Endothelial cell of umbilical vein (primary cell): ENCODE measurements at regions of chr1 and their contacts with region 1.

Region 1: DNA sequence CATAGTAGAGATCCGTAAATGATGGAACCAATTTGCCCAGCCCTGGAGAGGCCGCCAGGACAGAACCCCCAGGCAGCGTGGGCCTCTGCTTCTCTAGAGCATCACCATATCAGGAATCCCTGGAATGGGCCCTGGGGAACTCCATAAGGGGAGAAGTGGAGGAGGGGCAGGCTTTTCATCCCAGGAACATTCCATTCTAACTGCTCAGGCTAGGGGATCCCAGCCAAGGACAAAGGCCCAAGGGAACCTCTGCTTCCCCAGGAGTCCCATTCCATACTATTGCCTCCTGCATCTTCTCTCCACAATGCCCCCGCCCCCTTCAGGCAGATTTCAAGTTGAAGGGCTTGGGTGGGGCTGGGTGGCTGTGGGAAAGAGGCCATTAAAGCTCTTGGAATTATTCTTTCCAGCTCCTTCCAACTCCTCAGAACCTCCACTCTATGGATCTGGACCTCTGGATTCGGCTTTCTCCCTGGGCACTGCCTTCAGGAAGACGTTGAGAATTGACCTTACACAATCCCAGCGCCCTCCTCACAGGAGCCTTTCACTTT is 6.0 kb downstream of the TRNP1 start:
- DNase-seq: peak; percentile 45
- H3K4me3 ChIP-seq: no peak overlapping the region
- H3K27ac ChIP-seq: peak overlapping the region; percentile 70
- H3K4me1 ChIP-seq: peaks cover 27% of the 10 kb centered on the region
- H3K27me3 ChIP-seq: no peaks in the 10 kb centered on the region
- CTCF ChIP-seq: no peak
- POLR2A ChIP-seq: no peak

Region 2: DNA sequence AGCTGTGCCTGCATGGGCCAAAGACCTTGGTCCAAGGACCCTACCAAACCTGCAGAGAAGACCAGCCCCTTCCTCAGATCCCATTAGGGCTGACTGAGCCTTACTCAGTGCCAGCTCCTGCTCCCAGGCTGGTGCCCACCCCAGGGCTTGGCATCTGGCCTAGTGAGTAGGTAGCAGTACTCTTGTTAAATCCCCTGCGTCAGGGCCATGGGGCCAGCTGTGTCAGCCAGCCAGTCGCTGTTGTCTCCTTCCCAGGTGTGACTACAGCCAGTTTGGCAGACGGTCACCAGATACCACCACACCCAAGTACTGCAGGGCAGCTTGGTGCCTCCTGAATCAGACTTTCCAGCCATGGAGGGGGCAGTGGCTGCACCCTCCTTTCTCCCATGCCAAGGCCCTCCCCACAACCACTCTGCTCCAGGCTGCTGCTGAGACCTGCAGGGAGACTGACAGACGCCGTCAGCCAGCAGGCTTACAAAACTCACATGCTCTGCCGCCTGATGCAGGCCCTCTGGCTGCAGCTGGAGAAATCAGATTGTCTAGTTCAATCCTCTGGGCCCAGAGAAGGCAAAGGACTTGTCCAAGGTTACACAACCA is 10.2 kb after region 1 on chr1:
- CTCF ChIA-PET with region 1: interaction called, 25 read pairs
- POLR2A ChIA-PET with region 1: no interaction called
- dilution Hi-C with region 1: no loop called
- intact Hi-C with region 1: loop called (anchors 2 kb)
- DNase-seq: no peak
- H3K4me3 ChIP-seq: no peak overlapping the region
- H3K27ac ChIP-seq: no peak overlapping the region
- H3K4me1 ChIP-seq: peaks cover 8% of the 10 kb centered on the region
- H3K27me3 ChIP-seq: no peaks in the 10 kb centered on the region
- CTCF ChIP-seq: no peak
- POLR2A ChIP-seq: no peak

Region 3: GRCh38 chr1:27037515-27037914 is 38.0 kb after region 1 on chr1:
- CTCF ChIA-PET with region 1: interaction called, 181 read pairs
- POLR2A ChIA-PET with region 1: no interaction called
- dilution Hi-C with region 1: no loop called
- intact Hi-C with region 1: no loop called
- DNase-seq: no peak
- H3K4me3 ChIP-seq: no peak overlapping the region
- H3K27ac ChIP-seq: no peak overlapping the region
- H3K4me1 ChIP-seq: peaks cover 14% of the 10 kb centered on the region
- H3K27me3 ChIP-seq: no peaks in the 10 kb centered on the region
- CTCF ChIP-seq: no peak
- POLR2A ChIP-seq: no peak

Region 4: GRCh38 chr1:27097484-27097917 is 98.0 kb after region 1 on chr1:
- CTCF ChIA-PET with region 1: interaction called, 121 read pairs
- POLR2A ChIA-PET with region 1: no interaction called
- dilution Hi-C with region 1: no loop called
- intact Hi-C with region 1: loop called (anchors 1 kb)
- DNase-seq: peak; percentile 64
- H3K4me3 ChIP-seq: no peak overlapping the region
- H3K27ac ChIP-seq: no peak overlapping the region
- H3K4me1 ChIP-seq: no peaks in the 10 kb centered on the region
- H3K27me3 ChIP-seq: no peaks in the 10 kb centered on the region
- CTCF ChIP-seq: peak; percentile 89 to 91
- POLR2A ChIP-seq: no peak

Region 5: DNA sequence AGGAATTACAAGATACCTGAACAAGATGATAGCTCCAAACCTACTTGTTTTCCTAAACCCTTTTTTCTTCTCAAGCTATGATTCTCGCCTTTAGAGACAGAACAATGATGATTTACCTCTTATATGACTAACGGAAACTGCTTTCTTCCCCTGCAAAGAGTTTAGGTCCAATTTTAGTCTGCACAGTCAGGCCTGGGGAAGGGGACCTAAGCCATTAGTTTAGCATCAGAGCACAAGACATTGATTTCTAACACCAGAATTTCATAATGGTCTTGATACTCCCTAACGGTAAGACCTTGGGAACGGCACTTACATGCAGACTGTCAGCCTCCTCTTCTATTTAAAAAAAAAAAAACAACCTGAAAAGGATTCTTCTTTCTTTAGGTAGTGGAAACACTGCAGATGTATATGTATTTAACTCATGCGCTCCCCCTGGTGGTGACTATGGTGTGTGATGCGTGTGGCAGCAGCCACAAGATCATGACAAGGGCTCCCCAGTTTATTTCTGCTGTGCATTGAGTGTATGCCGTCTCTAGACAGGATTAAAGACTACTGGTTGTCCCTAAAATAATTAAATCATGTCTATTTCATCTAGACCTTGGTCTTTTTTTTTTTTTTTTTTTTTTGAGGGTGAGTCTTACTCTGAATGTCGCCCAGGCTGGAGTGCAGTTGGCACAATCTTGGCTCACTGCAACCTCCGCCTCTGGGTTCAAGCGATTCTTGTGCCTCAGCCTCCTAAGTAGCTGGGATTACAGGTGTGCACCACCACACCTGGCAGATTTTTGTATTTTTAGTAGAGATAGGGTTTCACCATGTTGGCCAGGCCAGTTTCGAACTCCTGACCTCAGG is 285.1 kb after region 1 on chr1:
- CTCF ChIA-PET with region 1: interaction called, 8 read pairs
- POLR2A ChIA-PET with region 1: no interaction called
- dilution Hi-C with region 1: no loop called
- intact Hi-C with region 1: loop called (anchors 5 kb)
- DNase-seq: peak; percentile 74
- H3K4me3 ChIP-seq: no peak overlapping the region
- H3K27ac ChIP-seq: no peak overlapping the region
- H3K4me1 ChIP-seq: no peaks in the 10 kb centered on the region
- H3K27me3 ChIP-seq: no peaks in the 10 kb centered on the region
- CTCF ChIP-seq: peak; percentile 76 to 85
- POLR2A ChIP-seq: no peak